ENCODE measurements at regions of chr4 and their contacts with region 1.

Region 1: GRCh38 chr4:4488405-4489404 is 53.1 kb downstream of the STX18 start:
- DNase-seq: peak; percentile 69
- H3K4me3 ChIP-seq: no peak overlapping the region
- H3K27ac ChIP-seq: no peak overlapping the region
- H3K4me1 ChIP-seq: no peaks in the 10 kb centered on the region
- H3K27me3 ChIP-seq: no peaks in the 10 kb centered on the region
- CTCF ChIP-seq: peak; percentile 89

Region 2: DNA sequence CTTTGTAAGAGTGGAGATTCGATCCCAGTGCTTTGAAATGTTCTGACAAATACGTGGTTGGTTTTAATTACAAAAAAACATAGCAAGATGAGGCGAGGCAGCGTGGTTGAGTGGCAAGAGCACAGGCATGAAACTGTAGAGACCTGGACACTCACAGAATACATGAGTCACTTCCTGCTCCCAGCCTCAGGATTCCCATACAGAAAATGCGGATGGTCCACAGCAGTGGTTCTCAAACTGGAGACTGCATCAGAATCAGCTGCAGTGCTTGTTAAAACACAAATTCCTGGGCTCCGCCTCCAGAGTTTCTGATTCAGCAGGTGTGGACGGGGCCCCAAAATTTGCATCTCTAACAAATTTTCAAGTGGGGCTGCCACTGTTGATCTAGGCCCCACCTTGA is 272.1 kb before region 1 on chr4:
- intact Hi-C with region 1: no loop called
- DNase-seq: no peak
- H3K4me3 ChIP-seq: no peak overlapping the region
- H3K27ac ChIP-seq: no peak overlapping the region
- H3K4me1 ChIP-seq: no peaks in the 10 kb centered on the region
- H3K27me3 ChIP-seq: no peaks in the 10 kb centered on the region
- CTCF ChIP-seq: no peak

Region 3: DNA sequence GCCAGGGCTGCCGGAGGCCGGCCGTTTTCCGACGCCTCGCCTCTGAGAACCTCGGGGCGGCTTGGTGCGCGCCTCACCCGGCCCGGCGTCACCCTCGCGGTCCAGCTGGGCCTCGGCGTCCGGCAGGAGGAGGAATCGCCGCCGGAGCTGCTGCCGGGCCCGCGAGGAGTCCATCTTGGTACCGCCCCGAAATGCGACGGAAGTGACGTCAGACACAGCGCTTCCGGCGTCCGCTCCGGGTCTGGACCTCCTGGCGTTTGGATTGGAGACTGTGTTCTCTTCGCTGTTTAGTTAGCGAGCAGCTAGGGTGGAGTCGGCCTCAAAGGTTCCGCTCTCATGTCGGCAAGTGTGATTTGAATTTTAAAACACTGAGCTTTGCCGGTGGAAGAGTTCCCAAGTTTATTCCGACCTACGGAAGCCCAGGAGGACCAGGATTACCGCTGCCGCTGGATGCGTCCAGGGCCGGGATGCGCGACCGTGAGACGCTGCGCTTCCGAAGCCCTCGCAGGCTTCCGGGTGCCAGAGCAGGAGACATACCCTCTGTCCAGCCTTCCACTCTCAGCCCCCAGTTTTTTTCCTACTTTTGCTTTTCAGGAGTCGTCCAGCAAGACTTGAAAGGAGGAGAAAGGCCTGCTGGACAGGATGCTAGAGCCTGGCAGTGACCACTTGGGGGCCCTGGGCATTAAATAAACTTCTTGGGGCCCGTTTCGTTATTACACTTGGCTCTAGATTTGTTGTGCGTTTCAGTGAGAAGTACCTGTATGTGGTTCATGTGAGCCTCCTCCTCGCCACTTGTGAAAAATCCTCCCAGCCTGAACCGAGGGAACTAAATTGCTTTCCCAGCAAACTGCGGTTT is 240.4 kb before region 1 on chr4 and contains the start of gene TMEM128:
- intact Hi-C with region 1: no loop called
- DNase-seq: peak; percentile 93
- H3K4me3 ChIP-seq: peak within 1 kb of the TSS; percentile 98
- H3K27ac ChIP-seq: peak within 1 kb of the TSS; percentile 93
- H3K4me1 ChIP-seq: peaks cover 11% of the 10 kb centered on the region
- H3K27me3 ChIP-seq: no peaks in the 10 kb centered on the region
- CTCF ChIP-seq: no peak
- total RNA-seq, gene TMEM128: 16.9 to 18.7 TPM

Region 4: DNA sequence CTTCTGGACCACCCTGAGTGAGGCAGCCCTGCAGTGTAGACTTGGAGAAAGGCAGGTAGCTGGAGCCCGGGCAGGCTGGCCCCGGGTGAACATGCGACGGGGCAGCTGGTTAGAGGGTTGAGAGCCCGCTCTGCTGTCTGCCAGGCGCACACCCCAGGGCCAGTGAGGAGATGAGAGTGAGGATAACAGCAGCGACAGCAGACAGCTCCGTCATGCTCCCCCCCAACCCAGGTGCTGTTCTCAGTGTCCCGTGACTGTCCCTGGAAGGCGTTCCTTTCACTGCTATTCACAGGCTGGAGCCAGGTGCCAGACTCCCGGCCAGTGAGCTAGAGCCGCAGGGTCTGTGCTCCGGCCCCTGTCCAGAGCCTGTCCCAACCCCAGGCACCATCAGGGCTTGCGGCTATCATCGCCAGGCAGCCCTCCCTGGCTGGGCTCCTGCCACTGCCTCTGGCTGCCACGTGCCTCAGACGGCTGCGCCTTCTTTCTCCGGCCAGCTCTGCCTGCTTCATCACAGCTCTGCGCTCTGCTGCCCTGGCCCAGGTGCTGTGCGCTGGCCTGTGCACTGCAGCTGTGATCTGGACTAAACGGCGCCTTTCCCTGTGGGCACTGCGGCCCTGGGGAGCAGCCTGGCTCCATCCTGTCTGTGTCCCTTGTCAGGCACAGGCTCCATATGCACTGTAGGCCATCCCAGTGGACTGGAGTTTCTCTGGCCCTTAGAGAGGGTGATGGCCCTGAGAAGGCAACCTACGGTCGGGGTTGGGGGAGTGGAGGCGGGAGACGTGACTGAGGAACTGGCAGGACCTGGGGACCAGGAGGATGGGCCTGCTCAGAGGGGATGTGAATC is 82.0 kb before region 1 on chr4:
- intact Hi-C with region 1: no loop called
- DNase-seq: no peak
- H3K4me3 ChIP-seq: no peak overlapping the region
- H3K27ac ChIP-seq: no peak overlapping the region
- H3K4me1 ChIP-seq: no peaks in the 10 kb centered on the region
- H3K27me3 ChIP-seq: no peaks in the 10 kb centered on the region
- CTCF ChIP-seq: no peak

Region 5: DNA sequence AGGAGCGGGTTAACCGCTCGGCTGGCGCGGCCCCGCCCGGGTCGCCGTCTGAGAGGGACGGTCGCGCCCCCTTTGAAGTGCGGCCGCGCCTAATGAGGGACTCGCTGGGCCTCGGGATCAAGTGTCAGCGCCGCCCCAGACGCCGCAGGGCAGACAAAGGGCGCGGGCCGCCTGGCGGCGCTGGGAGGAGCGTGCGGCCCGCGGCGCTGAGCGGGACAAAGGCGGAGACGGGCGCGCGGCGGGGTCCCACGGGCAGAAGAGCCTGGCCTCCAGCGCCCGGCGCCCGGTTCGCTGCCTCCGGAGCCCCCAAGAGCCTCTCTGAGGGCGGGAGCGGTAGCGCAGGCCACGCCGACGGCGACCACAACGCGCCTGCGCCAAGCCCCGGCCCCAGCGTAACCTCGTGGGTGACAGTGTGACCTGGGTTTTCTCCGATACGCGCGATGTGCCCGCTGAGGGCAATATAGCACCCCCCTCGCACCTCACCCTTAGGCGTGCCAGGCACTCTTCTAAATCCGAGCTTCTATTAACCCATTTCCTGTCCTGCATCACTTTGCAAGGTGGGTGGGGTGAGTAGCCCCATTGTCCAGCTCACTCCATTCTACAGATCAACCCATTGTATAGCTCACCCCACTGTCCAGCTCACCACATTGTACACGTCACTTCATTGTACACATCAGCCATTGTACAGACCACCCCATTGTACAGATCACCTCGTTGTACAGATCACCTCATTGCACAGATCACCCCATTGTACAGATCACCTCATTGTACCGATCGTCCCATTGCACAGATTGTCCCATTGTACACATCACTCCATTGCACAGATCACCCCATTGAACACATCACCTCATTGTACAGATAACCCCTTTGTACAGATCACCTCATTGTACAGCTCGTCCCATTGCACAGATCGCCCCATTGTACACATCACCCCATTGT is 86.8 kb after region 1 on chr4:
- intact Hi-C with region 1: loop called (anchors 5 kb)
- DNase-seq: peak; percentile 72
- H3K4me3 ChIP-seq: peak overlapping the region; percentile 59
- H3K27ac ChIP-seq: peak overlapping the region; percentile 67
- H3K4me1 ChIP-seq: no peaks in the 10 kb centered on the region
- H3K27me3 ChIP-seq: no peaks in the 10 kb centered on the region
- CTCF ChIP-seq: peak; percentile 67

Region 6: GRCh38 chr4:4880492-4880891 is 391.8 kb after region 1 on chr4:
- intact Hi-C with region 1: loop called (anchors 10 kb)
- DNase-seq: no peak
- H3K4me3 ChIP-seq: no peak overlapping the region
- H3K27ac ChIP-seq: no peak overlapping the region
- H3K4me1 ChIP-seq: no peaks in the 10 kb centered on the region
- H3K27me3 ChIP-seq: no peaks in the 10 kb centered on the region
- CTCF ChIP-seq: no peak

Region 7: GRCh38 chr4:5098176-5098575 is 609.5 kb after region 1 on chr4:
- intact Hi-C with region 1: no loop called
- DNase-seq: no peak
- H3K4me3 ChIP-seq: no peak overlapping the region
- H3K27ac ChIP-seq: no peak overlapping the region
- H3K4me1 ChIP-seq: no peaks in the 10 kb centered on the region
- H3K27me3 ChIP-seq: no peaks in the 10 kb centered on the region
- CTCF ChIP-seq: no peak

Measured in colonic mucosa (tissue), 4 donors.